ENCODE measurements at regions of chr1 and their contacts with region 1.

Region 1: GRCh38 chr1:25608488-25609178 is 8.0 kb upstream of the MAN1C1 start:
- DNase-seq: peak; percentile 62 to 88 (median 79)
- ATAC-seq: peak; percentile 95
- H3K4me3 ChIP-seq: no peak overlapping the region
- H3K27ac ChIP-seq: no peak overlapping the region
- H3K4me1 ChIP-seq: peaks cover 5 to 7% of the 10 kb centered on the region in 2 donors
- H3K27me3 ChIP-seq: peaks cover 0 to 9% of the 10 kb centered on the region in 2 donors
- CTCF ChIP-seq: peak; percentile 41 to 42

Region 2: DNA sequence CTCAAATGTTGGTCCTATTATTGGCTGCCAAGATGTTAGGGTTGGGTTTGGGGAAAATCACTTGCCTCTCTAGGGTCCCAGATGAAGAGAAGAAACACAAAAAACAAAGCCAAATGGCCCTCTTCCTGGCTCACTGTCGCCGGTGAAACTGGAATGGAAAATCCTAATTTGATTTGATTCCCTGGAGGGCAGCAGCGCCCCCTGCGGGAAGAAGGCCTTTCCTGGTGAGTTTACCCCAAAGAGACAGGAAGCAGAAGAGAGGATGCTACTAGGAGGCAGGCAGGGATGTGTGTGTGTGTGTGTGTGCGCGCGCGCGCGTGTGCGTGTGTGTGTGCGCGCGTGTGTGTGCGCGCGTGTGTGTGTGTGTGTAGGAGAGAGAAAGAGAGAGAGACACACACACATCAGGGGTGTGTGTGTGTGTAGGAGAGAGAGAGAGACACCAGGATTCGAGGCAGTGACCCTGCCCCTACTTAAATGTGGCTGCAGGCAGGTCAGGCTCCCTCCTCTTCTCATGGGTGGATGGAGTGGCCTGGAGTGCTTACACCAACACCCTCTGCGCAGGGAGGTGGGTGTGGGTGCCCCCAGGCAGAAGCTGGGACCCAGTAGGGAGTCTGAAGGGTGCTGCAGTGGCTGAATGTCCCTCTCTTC is 188.3 kb after region 1 on chr1:
- intact Hi-C with region 1: loop called in 1 of 2 experiments (anchors 5 kb)
- DNase-seq: peak; percentile 58 to 88 (median 82)
- ATAC-seq: peak; percentile 74
- H3K4me3 ChIP-seq: no peak overlapping the region
- H3K27ac ChIP-seq: peak overlapping the region; percentile 35 to 50
- H3K4me1 ChIP-seq: peaks cover 11 to 43% of the 10 kb centered on the region in 2 donors
- H3K27me3 ChIP-seq: no peaks in the 10 kb centered on the region
- CTCF ChIP-seq: peak; percentile 67 to 82